A549 (cell line): ENCODE measurements at regions of chr15 and their contacts with region 1.

Region 1: DNA sequence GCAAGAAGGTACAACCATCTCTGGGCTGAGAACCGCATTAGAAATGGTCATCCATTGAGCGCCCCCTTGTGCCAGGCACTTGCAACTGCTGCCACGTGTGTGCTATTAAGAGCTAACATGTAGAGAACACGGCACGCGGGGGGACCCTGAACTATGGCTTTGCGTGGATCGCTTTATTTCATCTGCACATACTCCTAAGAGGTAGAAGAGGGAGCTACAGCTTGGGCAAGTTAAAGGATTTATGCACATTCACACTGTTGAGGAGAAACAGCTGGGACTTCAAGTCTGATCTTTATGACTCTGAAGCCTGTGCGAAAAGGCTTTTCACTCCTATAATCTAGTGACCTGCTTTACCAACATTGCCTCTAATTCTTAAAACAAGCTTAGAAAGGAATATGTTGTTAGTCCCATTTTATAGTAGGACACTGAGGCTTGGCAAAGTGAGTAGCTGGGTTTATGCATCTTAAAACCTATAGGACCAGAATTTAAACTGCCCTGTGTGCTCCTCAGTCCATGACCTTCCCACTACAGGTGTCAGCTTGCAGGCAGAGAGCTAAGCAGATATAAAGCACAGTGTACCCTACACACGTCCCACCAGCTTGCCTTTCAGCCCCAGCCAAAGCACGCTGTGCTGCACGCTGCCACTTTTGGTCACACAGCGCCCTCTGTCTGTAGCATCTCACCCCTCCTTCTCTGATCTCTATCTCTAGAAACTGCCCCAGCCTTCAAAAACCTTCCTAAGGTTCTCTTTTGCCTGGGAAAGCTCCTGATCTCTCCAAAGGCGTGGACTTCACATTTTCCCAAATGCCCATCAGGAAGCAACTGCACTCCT is 57.8 kb downstream of the STARD5 start:
- DNase-seq: peak; percentile 82 to 90
- ATAC-seq: peak; percentile 92 to 98
- H3K4me3 ChIP-seq: no peak overlapping the region
- H3K27ac ChIP-seq: no peak overlapping the region
- H3K4me1 ChIP-seq: peaks cover 4% of the 10 kb centered on the region; the same call in 2 of the 3 replicates
- CTCF ChIP-seq: peak; percentile 79
- EP300 ChIP-seq: no peak
- POLR2A ChIP-seq: no peak
- RAD21 ChIP-seq: peak; percentile 87 to 96

Region 2: DNA sequence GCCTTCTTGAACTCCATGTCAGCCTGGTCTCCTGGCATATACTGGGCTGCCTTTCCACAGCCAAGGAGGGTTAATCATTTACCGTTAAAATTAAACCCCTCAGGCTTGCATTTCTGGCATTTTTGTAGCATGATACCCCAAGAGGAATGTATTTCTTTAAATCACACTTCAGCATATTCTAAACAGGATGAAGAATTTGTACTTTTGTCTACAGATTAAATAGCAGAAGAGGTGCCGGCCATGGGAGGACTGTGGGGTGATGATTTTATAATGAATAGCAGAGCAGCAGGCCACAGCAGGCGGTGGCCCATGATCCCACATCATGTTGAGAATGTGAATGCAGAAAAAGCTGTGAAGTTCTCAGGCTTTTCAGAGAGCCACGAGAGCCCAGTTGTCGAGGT is 771.8 kb before region 1 on chr15:
- CTCF ChIA-PET with region 1: no interaction called
- POLR2A ChIA-PET with region 1: no interaction called
- DNase-seq: peak; percentile 52 to 71
- ATAC-seq: peak in 1 of 2 experiments; percentile 84; a peak in 3 of 6 replicates
- H3K4me3 ChIP-seq: no peak overlapping the region
- H3K27ac ChIP-seq: peak overlapping the region; percentile 42 to 79
- H3K4me1 ChIP-seq: peaks cover 36% of the 10 kb centered on the region
- CTCF ChIP-seq: no peak
- EP300 ChIP-seq: no peak; a peak in 1 of 5 replicates
- POLR2A ChIP-seq: no peak
- RAD21 ChIP-seq: no peak

Region 3: GRCh38 chr15:81023483-81024264 is 242.5 kb before region 1 on chr15:
- CTCF ChIA-PET with region 1: no interaction called
- POLR2A ChIA-PET with region 1: no interaction called
- DNase-seq: no peak
- ATAC-seq: no peak
- H3K4me3 ChIP-seq: no peak overlapping the region
- H3K27ac ChIP-seq: no peak overlapping the region
- H3K4me1 ChIP-seq: no peaks in the 10 kb centered on the region
- CTCF ChIP-seq: no peak
- EP300 ChIP-seq: no peak
- POLR2A ChIP-seq: no peak
- RAD21 ChIP-seq: no peak

Region 4: DNA sequence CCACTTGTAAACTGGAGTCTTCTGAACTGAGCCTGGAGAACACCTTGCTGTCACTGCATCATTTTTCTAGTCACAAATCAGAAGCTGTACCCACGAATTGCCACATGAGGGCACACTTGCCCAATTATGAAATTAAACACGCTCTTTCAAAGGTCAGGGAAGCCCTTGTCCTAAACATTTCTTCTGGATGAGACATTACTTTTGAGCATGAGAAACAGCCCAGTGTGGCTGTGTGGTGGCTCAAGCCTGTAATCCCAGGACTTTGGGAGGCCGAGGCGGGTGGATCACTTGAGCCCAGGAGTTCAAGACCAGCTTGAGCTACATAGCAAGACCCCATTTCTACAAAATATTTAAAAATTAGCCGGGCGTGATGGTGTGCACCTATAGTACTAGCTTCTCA is 159.6 kb before region 1 on chr15:
- CTCF ChIA-PET with region 1: interaction called, 243 read pairs
- POLR2A ChIA-PET with region 1: interaction called, 8 read pairs
- DNase-seq: peak; percentile 61 to 64
- ATAC-seq: peak; percentile 62 to 83
- H3K4me3 ChIP-seq: no peak overlapping the region
- H3K27ac ChIP-seq: no peak overlapping the region
- H3K4me1 ChIP-seq: no peaks in the 10 kb centered on the region
- CTCF ChIP-seq: peak; percentile 73
- EP300 ChIP-seq: no peak
- POLR2A ChIP-seq: no peak
- RAD21 ChIP-seq: peak; percentile 75 to 81

Region 5: DNA sequence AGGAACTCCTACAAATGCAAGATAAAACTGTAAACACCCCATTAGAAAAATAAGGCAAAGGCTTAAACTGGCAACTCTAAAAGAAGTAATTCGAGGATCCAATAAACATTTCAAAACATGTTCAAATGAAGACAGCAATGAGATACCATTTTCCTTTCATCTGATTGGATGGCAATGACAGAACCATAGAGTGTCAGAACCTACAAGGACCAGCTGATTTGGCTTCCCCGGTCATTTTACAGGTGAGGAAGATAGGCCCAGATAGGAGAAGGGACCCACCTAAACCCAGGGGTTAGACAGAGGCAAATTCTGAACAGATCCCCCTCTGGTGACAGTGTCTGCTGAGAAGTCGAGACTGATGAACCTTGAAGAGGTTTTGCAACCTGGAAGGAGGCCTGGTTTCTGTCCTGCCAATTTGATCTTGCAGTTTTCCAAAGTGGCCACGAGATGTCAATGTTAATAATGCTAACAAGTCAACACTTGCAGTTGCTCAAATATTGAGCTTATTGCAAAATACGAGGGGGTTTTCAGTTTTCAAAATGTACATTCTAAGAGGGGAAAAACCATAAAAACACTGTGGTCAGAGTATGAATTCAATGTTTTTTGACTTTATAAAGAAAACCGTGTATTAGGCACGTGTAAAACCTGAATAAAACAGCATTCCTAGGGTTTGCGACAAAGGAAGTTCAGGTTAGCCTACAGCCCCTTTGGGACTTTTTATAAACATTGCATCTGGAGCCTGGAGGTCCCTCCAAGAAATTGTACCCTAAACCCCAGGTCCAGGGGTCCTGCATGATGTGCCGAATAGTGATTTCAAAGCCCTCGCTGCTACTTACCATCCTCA is 110.6 kb before region 1 on chr15:
- CTCF ChIA-PET with region 1: interaction called, 173 read pairs
- POLR2A ChIA-PET with region 1: interaction called, 3 read pairs
- DNase-seq: peak; percentile 21 to 69
- ATAC-seq: peak; percentile 65 to 80; a peak in 4 of 6 replicates
- H3K4me3 ChIP-seq: no peak overlapping the region
- H3K27ac ChIP-seq: no peak overlapping the region
- H3K4me1 ChIP-seq: no peaks in the 10 kb centered on the region
- CTCF ChIP-seq: peak; percentile 62
- EP300 ChIP-seq: no peak
- POLR2A ChIP-seq: no peak
- RAD21 ChIP-seq: peak; percentile 50 to 59

Region 6: GRCh38 chr15:81229586-81229985 is 36.6 kb before region 1 on chr15:
- CTCF ChIA-PET with region 1: interaction called, 29 read pairs
- POLR2A ChIA-PET with region 1: no interaction called
- DNase-seq: no peak
- ATAC-seq: no peak
- H3K4me3 ChIP-seq: no peak overlapping the region
- H3K27ac ChIP-seq: no peak overlapping the region
- H3K4me1 ChIP-seq: no peaks in the 10 kb centered on the region
- CTCF ChIP-seq: no peak
- EP300 ChIP-seq: no peak
- POLR2A ChIP-seq: no peak
- RAD21 ChIP-seq: no peak

Region 7: DNA sequence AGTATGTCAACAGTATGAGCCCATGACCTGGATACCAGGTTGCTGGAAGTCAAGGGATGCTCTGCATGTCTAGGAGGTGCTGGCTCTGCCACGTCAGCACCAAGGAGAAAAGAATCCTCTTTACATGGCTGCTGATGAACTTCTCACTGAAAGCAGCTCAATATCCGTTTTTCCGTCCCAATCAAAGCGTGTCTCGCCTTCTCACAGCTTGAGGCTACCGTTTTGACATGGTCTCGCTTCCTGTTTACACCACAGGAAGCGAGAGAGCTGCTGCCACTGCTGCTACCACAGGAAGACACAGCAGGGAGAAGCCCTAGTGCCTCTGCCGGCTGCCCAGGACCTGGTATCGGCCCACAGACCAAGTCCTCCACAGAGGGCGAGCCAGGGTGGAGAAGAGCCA is 30.5 kb after region 1 on chr15:
- CTCF ChIA-PET with region 1: interaction called, 30 read pairs
- POLR2A ChIA-PET with region 1: no interaction called
- DNase-seq: no peak
- ATAC-seq: no peak
- H3K4me3 ChIP-seq: no peak overlapping the region
- H3K27ac ChIP-seq: no peak overlapping the region
- H3K4me1 ChIP-seq: peaks cover 16% of the 10 kb centered on the region
- CTCF ChIP-seq: no peak
- EP300 ChIP-seq: no peak
- POLR2A ChIP-seq: no peak
- RAD21 ChIP-seq: no peak

Region 8: GRCh38 chr15:81336568-81336967 is 70.4 kb after region 1 on chr15:
- CTCF ChIA-PET with region 1: interaction called, 18 read pairs
- POLR2A ChIA-PET with region 1: no interaction called
- DNase-seq: peak; percentile 21 to 36
- ATAC-seq: peak; percentile 35 to 76; a peak in 3 of 6 replicates
- H3K4me3 ChIP-seq: no peak overlapping the region
- H3K27ac ChIP-seq: no peak overlapping the region
- H3K4me1 ChIP-seq: peaks cover 13% of the 10 kb centered on the region; the same call in 2 of the 3 replicates
- CTCF ChIP-seq: peak; percentile 33; the same call in 1 of the 3 replicates
- EP300 ChIP-seq: no peak
- POLR2A ChIP-seq: no peak
- RAD21 ChIP-seq: peak; percentile 32 to 66; a peak in 2 of 5 replicates

Region 9: GRCh38 chr15:81410318-81410753 is 144.2 kb after region 1 on chr15:
- CTCF ChIA-PET with region 1: interaction called, 68 read pairs
- POLR2A ChIA-PET with region 1: no interaction called
- DNase-seq: peak; percentile 36 to 73
- ATAC-seq: peak; percentile 76 to 87
- H3K4me3 ChIP-seq: no peak overlapping the region
- H3K27ac ChIP-seq: no peak overlapping the region
- H3K4me1 ChIP-seq: no peaks in the 10 kb centered on the region
- CTCF ChIP-seq: peak; percentile 66
- EP300 ChIP-seq: no peak
- POLR2A ChIP-seq: no peak
- RAD21 ChIP-seq: peak; percentile 73 to 78